PC-3 (cell line): ENCODE measurements at regions of chr7 and their contacts with region 1.

Region 1: GRCh38 chr7:73342645-73343044 is 14.7 kb downstream of the FKBP6 start:
- DNase-seq: peak; percentile 8
- ATAC-seq: peak; percentile 84
- H3K4me3 ChIP-seq: no peak overlapping the region
- H3K27ac ChIP-seq: no peak overlapping the region
- H3K4me1 ChIP-seq: no peaks in the 10 kb centered on the region
- H3K27me3 ChIP-seq: no peaks in the 10 kb centered on the region; the same call in 1 of the 2 replicates
- CTCF ChIP-seq: peak; percentile 50

Region 2: DNA sequence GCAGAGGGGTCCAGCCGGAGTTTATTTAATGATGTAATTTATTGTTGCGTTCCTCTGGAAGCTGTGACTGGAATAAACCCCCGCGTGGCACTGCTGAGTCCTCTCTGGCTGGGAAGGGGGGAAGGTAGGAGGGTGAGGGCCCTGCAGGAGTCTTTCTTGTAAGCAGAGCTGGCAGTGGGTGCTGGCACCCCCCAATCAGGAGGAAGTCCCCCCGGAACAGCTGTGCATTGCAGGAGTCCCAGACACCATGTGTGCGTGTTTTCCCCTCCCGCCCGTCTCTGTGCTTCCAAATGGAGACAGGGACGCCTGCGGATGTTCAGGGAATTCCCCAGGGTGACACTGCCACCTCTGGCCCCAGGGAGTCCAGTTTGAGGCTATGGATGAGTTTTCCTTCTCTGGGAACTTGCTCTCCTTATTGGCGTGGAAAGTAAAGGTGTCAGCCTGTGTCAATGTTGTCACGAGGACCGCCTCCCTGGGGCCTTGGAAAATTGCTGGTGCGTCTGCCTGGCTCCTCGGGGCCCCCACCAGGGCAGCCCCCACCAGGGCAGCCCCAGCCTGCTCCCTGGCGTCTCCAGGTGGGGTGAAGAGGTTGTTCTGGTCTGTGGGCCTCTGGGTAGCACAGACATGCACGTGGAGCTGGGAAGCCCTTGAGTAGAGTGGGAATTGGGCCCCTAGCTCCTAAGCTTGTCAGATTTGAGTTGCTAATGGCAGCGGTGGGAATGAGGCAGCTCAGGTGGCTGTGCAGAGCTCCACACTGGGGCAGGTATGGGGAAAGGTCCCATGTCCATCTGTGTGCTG is 93.6 kb after region 1 on chr7:
- CTCF ChIA-PET with region 1: interaction called, 3 read pairs
- POLR2A ChIA-PET with region 1: no interaction called
- intact Hi-C with region 1: loop called (anchors 1 kb)
- DNase-seq: peak; percentile 55
- ATAC-seq: peak; percentile 79
- H3K4me3 ChIP-seq: no peak overlapping the region
- H3K27ac ChIP-seq: no peak overlapping the region
- H3K4me1 ChIP-seq: peaks cover 9% of the 10 kb centered on the region; the same call in 1 of the 2 replicates
- H3K27me3 ChIP-seq: no peaks in the 10 kb centered on the region
- CTCF ChIP-seq: peak; percentile 45; the same call in 1 of the 2 replicates

Region 3: GRCh38 chr7:73451780-73452398 is 109.2 kb after region 1 on chr7:
- CTCF ChIA-PET with region 1: interaction called, 6 read pairs
- POLR2A ChIA-PET with region 1: no interaction called
- intact Hi-C with region 1: loop called (anchors 5 kb)
- DNase-seq: peak; percentile 67
- ATAC-seq: peak; percentile 74
- H3K4me3 ChIP-seq: no peak overlapping the region
- H3K27ac ChIP-seq: no peak overlapping the region
- H3K4me1 ChIP-seq: no peaks in the 10 kb centered on the region
- H3K27me3 ChIP-seq: no peaks in the 10 kb centered on the region
- CTCF ChIP-seq: peak; percentile 97